ENCODE measurements at regions of chr1 and their contacts with region 1.

Region 1: DNA sequence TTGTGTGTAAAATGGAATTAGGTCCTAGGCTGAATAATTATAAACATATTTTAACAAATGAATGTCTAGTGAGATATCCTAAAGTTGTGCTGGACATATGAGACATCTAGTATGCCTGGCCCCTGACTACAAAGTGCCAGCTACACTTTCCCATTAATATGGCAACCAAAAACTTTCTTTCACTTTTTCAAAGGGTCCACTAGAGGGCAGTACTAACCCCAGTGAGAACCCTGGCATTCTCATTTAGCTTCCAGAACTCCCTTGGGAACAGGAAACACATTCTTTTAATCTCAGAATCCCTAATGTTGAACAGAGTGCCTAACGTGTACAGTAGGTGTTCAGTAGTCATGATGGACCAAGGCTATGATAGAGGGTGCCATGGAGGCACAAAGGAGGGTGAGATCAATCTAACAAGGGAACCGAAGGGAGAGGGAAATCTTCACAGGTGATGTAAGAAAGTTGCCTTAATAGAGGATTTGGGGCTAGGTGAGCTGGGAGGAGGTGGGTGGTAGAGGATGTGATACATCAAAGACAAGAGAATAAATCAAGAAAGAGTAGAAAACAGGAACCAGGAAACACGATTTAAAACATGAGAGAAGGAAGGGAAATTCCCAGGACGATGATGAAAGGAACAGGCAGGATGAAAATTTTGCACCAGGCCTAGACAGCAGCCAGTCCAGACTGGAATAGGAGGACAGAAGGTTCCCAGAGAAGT is 41.6 kb downstream of the NSL1 start:
- DNase-seq: peak; percentile 32
- H3K4me3 Mint-ChIP-seq: peak overlapping the region; percentile 29
- H3K27ac Mint-ChIP-seq: peak overlapping the region; percentile 88
- H3K4me1 Mint-ChIP-seq: peaks cover 20% of the 10 kb centered on the region
- H3K27me3 Mint-ChIP-seq: no peaks in the 10 kb centered on the region
- CTCF ChIP-seq: peak; percentile 53

Region 2: GRCh38 chr1:212665241-212666115 is 84.5 kb before region 1 on chr1:
- CTCF ChIA-PET with region 1: interaction called, 23 read pairs
- intact Hi-C with region 1: no loop called
- DNase-seq: peak; percentile 91
- H3K4me3 Mint-ChIP-seq: peak overlapping the region; percentile 70
- H3K27ac Mint-ChIP-seq: peak overlapping the region; percentile 10
- H3K4me1 Mint-ChIP-seq: no peaks in the 10 kb centered on the region
- H3K27me3 Mint-ChIP-seq: peaks cover 24% of the 10 kb centered on the region
- CTCF ChIP-seq: peak; percentile 97

Region 3: GRCh38 chr1:212782422-212783154 is 32.6 kb after region 1 on chr1:
- CTCF ChIA-PET with region 1: interaction called, 4 read pairs
- intact Hi-C with region 1: loop called (anchors 2 kb)
- DNase-seq: no peak
- H3K4me3 Mint-ChIP-seq: no peak overlapping the region
- H3K27ac Mint-ChIP-seq: peak overlapping the region; percentile 9
- H3K4me1 Mint-ChIP-seq: peaks cover 7% of the 10 kb centered on the region
- H3K27me3 Mint-ChIP-seq: no peaks in the 10 kb centered on the region
- CTCF ChIP-seq: peak; percentile 57

Region 4: DNA sequence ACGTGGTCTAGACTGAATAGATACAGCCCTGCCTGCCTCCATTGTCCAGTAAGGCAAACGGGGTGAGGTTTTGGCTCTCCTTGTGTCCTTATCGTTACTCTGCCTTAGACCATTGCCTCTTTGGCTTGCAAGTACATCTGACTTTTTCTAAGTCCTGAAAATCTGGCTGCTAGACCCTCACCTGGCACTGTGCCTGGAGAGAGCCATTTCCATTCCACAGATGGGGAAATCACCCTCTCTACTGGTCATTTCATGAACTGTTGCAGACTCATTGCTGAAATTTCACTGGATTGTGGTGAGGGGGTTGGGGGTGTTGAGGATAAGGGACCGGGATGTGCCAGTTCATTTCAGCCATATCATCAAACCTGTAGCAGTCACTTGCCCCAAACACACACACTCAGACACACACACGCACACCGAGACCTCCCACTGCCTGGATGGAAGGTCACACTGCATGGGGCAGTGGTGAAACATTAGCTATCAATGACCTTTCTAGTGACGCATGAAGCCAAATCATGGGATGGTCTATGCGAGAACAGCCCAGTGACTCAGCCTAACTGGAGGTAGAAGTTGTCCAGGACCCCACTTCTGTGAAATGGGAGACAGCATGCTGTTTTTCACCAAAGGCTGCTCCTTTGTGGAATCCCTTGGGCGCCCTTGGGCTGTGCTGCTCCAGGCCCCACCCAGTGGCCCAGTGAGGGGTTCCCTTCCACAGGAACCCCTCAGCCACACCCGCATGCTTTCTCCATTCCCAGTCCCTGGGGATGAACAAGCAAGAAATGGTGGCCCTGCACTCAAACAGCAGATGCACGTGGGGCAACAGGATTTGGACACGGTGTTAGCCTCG is 165.5 kb after region 1 on chr1:
- CTCF ChIA-PET with region 1: no interaction called
- intact Hi-C with region 1: loop called (anchors 1 kb)
- DNase-seq: peak; percentile 55
- H3K4me3 Mint-ChIP-seq: no peak overlapping the region
- H3K27ac Mint-ChIP-seq: peak overlapping the region; percentile 53
- H3K4me1 Mint-ChIP-seq: peaks cover 23% of the 10 kb centered on the region
- H3K27me3 Mint-ChIP-seq: peaks cover 13% of the 10 kb centered on the region
- CTCF ChIP-seq: peak; percentile 74

Region 5: GRCh38 chr1:212994926-212995325 is 244.9 kb after region 1 on chr1:
- CTCF ChIA-PET with region 1: interaction called, 9 read pairs
- intact Hi-C with region 1: loop called (anchors 2 kb)
- DNase-seq: no peak
- H3K4me3 Mint-ChIP-seq: no peak overlapping the region
- H3K27ac Mint-ChIP-seq: no peak overlapping the region
- H3K4me1 Mint-ChIP-seq: no peaks in the 10 kb centered on the region
- H3K27me3 Mint-ChIP-seq: no peaks in the 10 kb centered on the region
- CTCF ChIP-seq: no peak

Region 6: GRCh38 chr1:213858581-213858980 is 1108.6 kb after region 1 on chr1:
- CTCF ChIA-PET with region 1: interaction called, 13 read pairs
- intact Hi-C with region 1: no loop called
- DNase-seq: no peak
- H3K4me3 Mint-ChIP-seq: no peak overlapping the region
- H3K27ac Mint-ChIP-seq: no peak overlapping the region
- H3K4me1 Mint-ChIP-seq: no peaks in the 10 kb centered on the region
- H3K27me3 Mint-ChIP-seq: peaks cover 73% of the 10 kb centered on the region
- CTCF ChIP-seq: no peak